ENCODE measurements at regions of chr2 and their contacts with region 1.

Region 1: DNA sequence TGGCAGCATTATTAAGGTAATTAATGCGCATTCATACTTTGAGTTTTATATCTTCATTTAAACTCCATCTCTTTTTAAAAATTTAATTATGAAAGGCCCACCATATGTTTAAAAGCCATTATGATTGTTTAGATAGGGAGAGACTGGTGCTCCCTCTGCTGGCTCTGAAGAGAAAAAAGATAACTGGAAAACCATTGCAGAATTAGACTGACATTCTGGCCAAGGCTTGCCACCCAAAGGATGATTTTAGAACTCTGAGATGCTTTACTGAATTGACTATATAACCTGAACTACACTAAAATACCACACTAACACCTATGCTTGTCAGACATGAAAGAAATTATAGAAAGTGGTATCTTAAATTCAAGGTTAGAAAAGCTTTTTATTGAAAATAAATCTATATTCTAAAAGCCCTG is 127.6 kb upstream of the SPOPL start:
- DNase-seq: peak; percentile 57
- H3K4me3 ChIP-seq: no peak overlapping the region
- H3K27ac ChIP-seq: no peak overlapping the region
- H3K4me1 ChIP-seq: no peaks in the 10 kb centered on the region
- H3K27me3 ChIP-seq: no peaks in the 10 kb centered on the region
- CTCF ChIP-seq: peak; percentile 43 to 53
- POLR2A ChIP-seq: no peak

Region 2: GRCh38 chr2:137865954-137866540 is 508.0 kb before region 1 on chr2:
- CTCF ChIA-PET with region 1: interaction called, 4 read pairs
- POLR2A ChIA-PET with region 1: no interaction called
- dilution Hi-C with region 1: no loop called
- intact Hi-C with region 1: loop called (anchors 1 kb)
- DNase-seq: peak; percentile 53
- H3K4me3 ChIP-seq: no peak overlapping the region
- H3K27ac ChIP-seq: no peak overlapping the region
- H3K4me1 ChIP-seq: no peaks in the 10 kb centered on the region
- H3K27me3 ChIP-seq: peaks cover 0 to 3% of the 10 kb centered on the region in 2 experiments
- CTCF ChIP-seq: peak; percentile 57 to 63
- POLR2A ChIP-seq: no peak

Region 3: GRCh38 chr2:137947728-137948336 is 426.2 kb before region 1 on chr2:
- CTCF ChIA-PET with region 1: interaction called, 7 read pairs
- POLR2A ChIA-PET with region 1: no interaction called
- dilution Hi-C with region 1: no loop called
- intact Hi-C with region 1: loop called (anchors 1 kb)
- DNase-seq: peak; percentile 82
- H3K4me3 ChIP-seq: no peak overlapping the region
- H3K27ac ChIP-seq: no peak overlapping the region
- H3K4me1 ChIP-seq: no peaks in the 10 kb centered on the region
- H3K27me3 ChIP-seq: no peaks in the 10 kb centered on the region
- CTCF ChIP-seq: peak; percentile 45 to 62
- POLR2A ChIP-seq: no peak

Region 4: DNA sequence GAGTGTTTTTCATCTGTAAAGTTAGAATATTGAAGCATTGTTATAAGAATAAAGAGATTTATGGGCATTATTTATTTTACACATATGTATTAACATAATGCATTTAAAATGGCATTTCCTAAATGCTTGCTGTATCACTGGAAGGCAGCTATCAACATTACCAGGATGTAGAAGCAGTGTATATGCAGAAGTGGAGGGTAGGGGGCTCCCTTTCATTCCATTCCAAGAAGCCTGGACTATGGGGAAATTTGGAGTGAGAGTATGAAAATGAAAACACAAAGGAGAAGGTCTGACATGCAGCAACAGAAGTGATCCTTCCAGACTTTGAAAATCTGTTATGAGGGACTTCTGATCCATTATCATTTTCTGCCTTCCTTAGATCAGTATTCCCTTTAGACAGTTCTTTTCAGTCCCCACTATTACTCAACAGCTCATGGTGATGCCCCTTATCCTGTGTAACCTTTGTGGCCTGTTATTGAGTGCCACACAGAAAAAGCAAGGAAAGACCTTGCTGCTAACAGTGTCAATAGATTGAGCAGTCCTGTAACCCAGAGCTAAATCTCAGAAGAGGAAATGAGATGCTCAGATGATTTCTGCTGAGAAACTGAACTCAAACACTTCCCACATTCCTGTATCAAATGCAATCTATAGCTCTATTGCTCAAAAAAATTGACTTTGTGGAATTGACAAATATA is 193.2 kb before region 1 on chr2:
- CTCF ChIA-PET with region 1: interaction called, 33 read pairs
- POLR2A ChIA-PET with region 1: no interaction called
- dilution Hi-C with region 1: no loop called
- intact Hi-C with region 1: loop called (anchors 1 kb)
- DNase-seq: peak; percentile 5
- H3K4me3 ChIP-seq: no peak overlapping the region
- H3K27ac ChIP-seq: no peak overlapping the region
- H3K4me1 ChIP-seq: no peaks in the 10 kb centered on the region
- H3K27me3 ChIP-seq: no peaks in the 10 kb centered on the region
- CTCF ChIP-seq: no peak
- POLR2A ChIP-seq: no peak

Region 5: GRCh38 chr2:138275881-138276280 is 98.1 kb before region 1 on chr2:
- CTCF ChIA-PET with region 1: no interaction called
- POLR2A ChIA-PET with region 1: no interaction called
- dilution Hi-C with region 1: no loop called
- intact Hi-C with region 1: no loop called
- DNase-seq: no peak
- H3K4me3 ChIP-seq: no peak overlapping the region
- H3K27ac ChIP-seq: no peak overlapping the region
- H3K4me1 ChIP-seq: peaks cover 10% of the 10 kb centered on the region
- H3K27me3 ChIP-seq: no peaks in the 10 kb centered on the region
- CTCF ChIP-seq: no peak
- POLR2A ChIP-seq: no peak

Region 6: GRCh38 chr2:138475277-138475776 is 101.3 kb after region 1 on chr2:
- CTCF ChIA-PET with region 1: interaction called, 10 read pairs
- POLR2A ChIA-PET with region 1: no interaction called
- dilution Hi-C with region 1: no loop called
- intact Hi-C with region 1: no loop called
- DNase-seq: peak; percentile 68
- H3K4me3 ChIP-seq: no peak overlapping the region
- H3K27ac ChIP-seq: peak overlapping the region; percentile 72
- H3K4me1 ChIP-seq: peaks cover 21% of the 10 kb centered on the region
- H3K27me3 ChIP-seq: no peaks in the 10 kb centered on the region
- CTCF ChIP-seq: no peak
- POLR2A ChIP-seq: no peak

Region 7: DNA sequence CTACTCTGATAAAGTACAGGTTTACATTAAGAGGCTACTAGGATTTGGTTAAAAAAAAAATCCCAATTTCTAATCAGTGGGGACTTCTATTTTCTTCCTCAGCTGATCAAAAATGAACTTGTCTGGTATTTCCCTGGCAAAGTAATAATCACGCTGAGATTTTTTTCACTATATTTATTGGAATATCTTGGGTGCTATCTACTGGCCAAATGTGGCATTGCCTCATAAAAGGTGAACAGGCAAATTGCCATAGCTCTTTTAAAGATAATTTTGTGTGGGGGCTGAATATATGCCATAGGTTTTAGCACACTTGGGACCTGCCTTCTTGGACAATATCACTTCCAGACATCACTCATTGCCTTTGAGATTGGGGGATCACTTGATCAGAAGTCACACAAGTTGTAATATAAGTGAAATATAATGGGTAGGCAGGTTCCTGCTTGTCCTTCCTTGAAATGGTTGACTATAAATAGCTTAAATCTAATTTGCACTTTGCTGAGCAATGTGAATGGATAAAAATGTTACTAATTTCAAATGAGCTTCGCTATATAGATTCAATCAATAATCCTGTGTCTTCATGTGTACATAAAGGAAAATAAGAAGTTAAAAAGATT is 413.2 kb after region 1 on chr2:
- CTCF ChIA-PET with region 1: interaction called, 20 read pairs
- POLR2A ChIA-PET with region 1: no interaction called
- dilution Hi-C with region 1: no loop called
- intact Hi-C with region 1: loop called (anchors 2 kb)
- DNase-seq: peak; percentile 52
- H3K4me3 ChIP-seq: no peak overlapping the region
- H3K27ac ChIP-seq: no peak overlapping the region
- H3K4me1 ChIP-seq: no peaks in the 10 kb centered on the region
- H3K27me3 ChIP-seq: peaks cover 9 to 11% of the 10 kb centered on the region in 2 experiments
- CTCF ChIP-seq: peak; percentile 32 to 47
- POLR2A ChIP-seq: no peak

Region 8: DNA sequence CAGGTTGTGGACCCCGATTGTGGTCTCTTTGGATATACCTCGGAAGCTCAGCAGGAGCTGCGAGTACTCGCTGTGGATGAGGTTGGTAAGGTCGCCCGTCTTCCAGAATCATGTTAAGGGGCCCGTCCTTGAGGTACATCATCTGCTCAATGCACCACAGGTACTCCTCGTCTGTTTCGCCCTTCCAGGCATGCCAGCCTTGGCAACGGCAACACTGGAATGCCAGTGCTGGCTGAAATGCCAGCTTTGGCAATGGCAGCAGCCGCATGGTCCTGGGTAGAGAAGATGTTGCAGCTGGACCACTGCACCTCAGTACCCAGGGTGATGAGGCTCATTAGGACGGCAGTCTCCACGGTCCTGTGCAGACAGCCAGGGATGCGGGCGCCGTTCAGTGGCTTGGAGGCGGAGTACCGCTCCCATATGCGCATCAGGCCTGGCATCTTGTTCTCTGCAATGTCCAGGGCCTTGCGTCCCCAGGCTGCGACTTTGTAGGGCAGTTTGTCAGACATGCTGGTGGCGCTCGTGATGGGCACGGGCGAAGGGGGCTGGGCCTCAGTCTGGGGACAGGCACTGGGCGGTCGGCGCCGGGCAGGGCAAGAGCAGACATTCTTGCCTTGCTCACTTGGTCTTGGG is 528.4 kb after region 1 on chr2:
- CTCF ChIA-PET with region 1: no interaction called
- POLR2A ChIA-PET with region 1: no interaction called
- dilution Hi-C with region 1: no loop called
- intact Hi-C with region 1: no loop called
- DNase-seq: no peak
- H3K4me3 ChIP-seq: no peak overlapping the region
- H3K27ac ChIP-seq: no peak overlapping the region
- H3K4me1 ChIP-seq: no peaks in the 10 kb centered on the region
- H3K27me3 ChIP-seq: no peaks in the 10 kb centered on the region
- CTCF ChIP-seq: no peak
- POLR2A ChIP-seq: no peak